GM12878 (cell line): ENCODE measurements at regions of chr15 and their contacts with region 1.

Region 1: DNA sequence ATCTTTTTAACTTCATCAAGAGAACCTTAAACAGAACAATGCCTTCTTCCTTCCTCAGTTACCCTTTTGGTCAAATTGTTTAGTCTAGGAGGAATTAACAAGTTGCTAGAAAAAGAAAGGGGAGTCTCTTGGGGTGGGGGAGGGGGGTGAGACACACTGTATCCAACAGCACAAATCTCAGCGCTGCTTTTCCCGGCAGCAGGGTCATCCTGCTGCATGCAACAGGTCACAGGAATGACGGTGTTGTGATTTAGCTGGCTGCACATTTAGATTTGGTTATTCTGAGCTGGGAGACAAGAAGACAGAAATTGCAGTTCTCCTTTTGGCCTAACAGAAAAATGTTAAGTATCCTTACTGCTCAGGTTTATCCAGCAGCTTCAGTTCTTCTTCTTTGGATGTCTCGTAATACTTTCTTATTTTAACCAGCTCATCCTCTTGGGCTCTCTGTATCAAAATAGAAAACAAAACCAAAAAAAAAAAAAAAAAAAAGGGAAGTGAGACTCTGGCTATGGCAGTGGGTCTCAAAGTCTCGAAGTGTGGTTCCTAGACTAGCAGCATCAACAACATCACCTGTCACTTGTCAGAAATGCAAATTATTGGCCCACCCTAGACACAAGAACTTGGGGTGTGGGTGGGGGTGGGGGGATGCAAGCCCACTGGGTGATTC is 190.5 kb downstream of the GREM1 start:
- DNase-seq: peak; percentile 71
- ATAC-seq: peak; percentile 95
- H3K4me3 ChIP-seq: peak overlapping the region; percentile 51; the same call in 1 of the 2 replicates
- H3K27ac ChIP-seq: peak overlapping the region; percentile 64
- H3K4me1 ChIP-seq: peaks cover 24% of the 10 kb centered on the region
- H3K27me3 ChIP-seq: no peaks in the 10 kb centered on the region
- CTCF ChIP-seq: no peak
- EP300 ChIP-seq: peak; percentile 91 to 96
- POLR2A ChIP-seq: no peak
- RAD21 ChIP-seq: no peak

Region 2: DNA sequence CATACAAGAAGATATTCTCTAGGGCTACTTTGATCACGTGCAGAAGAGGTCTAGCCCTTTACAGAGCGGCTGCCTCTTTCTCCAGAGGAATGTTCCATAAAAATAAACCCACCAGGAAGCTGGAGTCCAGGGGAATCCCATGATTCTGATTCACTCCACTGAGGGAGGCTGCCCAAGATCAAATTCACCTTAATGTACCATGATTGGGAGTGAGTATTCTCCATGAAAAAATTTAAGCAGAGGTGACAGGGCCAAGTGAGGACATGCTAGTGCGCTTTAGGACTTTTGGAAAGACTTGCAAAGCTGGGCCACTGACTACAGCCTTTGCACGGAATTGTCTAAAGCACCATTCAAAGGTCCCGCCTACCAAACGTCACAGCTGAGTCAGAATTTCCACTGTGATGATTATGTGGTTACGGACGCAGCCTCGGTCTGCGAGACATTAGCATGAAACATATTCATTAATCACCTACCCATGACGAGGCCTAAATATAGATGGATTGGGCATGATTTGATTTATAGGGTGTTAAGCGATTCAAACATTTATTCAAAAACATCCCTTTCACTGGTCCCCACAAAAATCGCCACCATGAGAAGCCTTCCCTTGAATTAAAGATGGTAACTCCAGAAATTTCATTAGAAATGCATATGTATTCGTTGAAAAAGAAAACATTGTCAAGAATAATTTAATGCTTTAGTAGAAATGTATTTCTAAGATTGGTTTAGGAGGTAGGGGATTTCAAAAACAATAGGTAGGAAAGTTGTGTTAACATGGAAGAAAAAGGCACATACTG is 37.8 kb before region 1 on chr15:
- CTCF ChIA-PET with region 1: no interaction called
- POLR2A ChIA-PET with region 1: interaction called, 4 read pairs
- RAD21 ChIA-PET with region 1: interaction called, 5 read pairs
- SMC1A ChIA-PET with region 1: interaction called, 10 read pairs
- in situ Hi-C with region 1: no loop called
- intact Hi-C with region 1: loop called (anchors 2 kb)
- DNase-seq: peak; percentile 60
- ATAC-seq: peak; percentile 94
- H3K4me3 ChIP-seq: no peak overlapping the region
- H3K27ac ChIP-seq: no peak overlapping the region
- H3K4me1 ChIP-seq: peaks cover 3% of the 10 kb centered on the region; the same call in 1 of the 2 replicates
- H3K27me3 ChIP-seq: no peaks in the 10 kb centered on the region
- CTCF ChIP-seq: no peak
- EP300 ChIP-seq: peak; percentile 89 to 92
- POLR2A ChIP-seq: no peak
- RAD21 ChIP-seq: no peak

Region 3: DNA sequence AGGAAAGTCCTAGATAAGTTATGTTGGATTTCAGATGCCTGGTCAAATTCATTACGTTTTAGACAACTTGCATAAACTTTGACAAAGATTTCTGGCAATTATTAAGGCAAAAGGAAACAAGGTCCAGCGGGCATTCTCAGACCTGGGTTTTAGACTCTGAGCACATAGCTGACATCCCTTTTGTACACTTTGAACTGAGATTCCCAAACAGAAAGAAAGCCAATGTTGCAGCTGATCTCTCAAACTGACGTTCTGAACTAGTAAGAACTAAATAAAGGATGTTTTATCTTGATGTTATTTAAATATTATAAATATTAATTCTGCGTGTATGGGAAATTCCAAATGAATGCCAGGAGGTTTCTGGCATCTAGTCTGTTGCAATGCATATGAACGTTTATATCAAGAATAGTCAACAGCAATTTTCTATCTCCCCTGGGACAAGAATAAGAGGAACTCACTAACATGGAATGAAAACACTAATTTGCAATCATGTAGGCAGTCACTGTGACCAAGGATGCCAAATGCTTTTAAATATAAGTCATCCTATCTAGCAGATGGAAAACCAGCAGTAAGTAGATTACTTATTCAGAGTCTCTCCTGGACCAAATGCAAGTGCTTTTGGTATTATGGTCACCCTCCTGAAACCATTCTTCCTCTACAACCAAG is 11.6 kb after region 1 on chr15:
- CTCF ChIA-PET with region 1: interaction called, 15 read pairs
- POLR2A ChIA-PET with region 1: interaction called, 21 read pairs
- RAD21 ChIA-PET with region 1: interaction called, 18 read pairs
- SMC1A ChIA-PET with region 1: interaction called, 29 read pairs
- in situ Hi-C with region 1: no loop called
- intact Hi-C with region 1: no loop called
- DNase-seq: no peak
- ATAC-seq: no peak
- H3K4me3 ChIP-seq: no peak overlapping the region
- H3K27ac ChIP-seq: no peak overlapping the region
- H3K4me1 ChIP-seq: 0 out of 2 replicates have a peak, but pooled peaks cover 5% of the 10 kb centered on the region
- H3K27me3 ChIP-seq: no peaks in the 10 kb centered on the region; a peak in 1 of 4 replicates
- CTCF ChIP-seq: no peak
- EP300 ChIP-seq: no peak
- POLR2A ChIP-seq: no peak
- RAD21 ChIP-seq: no peak

Region 4: DNA sequence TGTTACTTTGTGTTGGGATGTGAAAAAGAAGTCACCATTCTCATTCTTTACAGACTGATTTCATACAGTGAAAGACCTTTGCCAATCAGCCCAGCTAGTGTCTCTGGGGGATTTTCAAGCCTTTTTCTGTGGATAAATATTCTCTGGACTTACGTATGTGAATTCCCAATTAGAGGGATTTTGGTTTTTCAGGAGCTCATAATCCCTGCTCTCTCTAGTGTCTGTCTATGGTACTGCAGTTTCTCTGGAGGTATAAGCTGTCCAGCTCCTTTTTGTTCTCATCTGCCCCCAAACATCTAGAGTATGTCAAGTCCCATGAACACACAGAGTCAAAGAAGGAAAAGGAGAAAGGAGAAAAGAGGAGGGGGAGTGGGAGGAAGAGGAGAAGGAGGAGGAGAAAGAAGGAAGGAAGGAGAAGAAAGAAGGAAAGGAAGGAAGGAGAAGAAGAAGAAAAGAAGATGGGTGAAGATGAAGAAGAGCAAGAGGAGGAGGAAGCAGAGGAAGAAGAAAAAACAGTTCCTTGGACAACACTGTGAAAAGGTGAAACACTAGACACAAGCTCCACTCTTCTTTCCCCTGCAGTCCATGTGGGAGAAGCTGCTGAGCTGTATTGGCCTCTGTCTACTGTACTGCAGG is 28.1 kb after region 1 on chr15:
- CTCF ChIA-PET with region 1: interaction called, 16 read pairs
- POLR2A ChIA-PET with region 1: no interaction called
- RAD21 ChIA-PET with region 1: interaction called, 13 read pairs
- SMC1A ChIA-PET with region 1: interaction called, 12 read pairs
- in situ Hi-C with region 1: no loop called
- intact Hi-C with region 1: no loop called
- DNase-seq: no peak
- ATAC-seq: peak; percentile 56; the same call in 2 of the 3 replicates
- H3K4me3 ChIP-seq: no peak overlapping the region
- H3K27ac ChIP-seq: no peak overlapping the region
- H3K4me1 ChIP-seq: no peaks in the 10 kb centered on the region
- H3K27me3 ChIP-seq: peaks cover 0 to 2% of the 10 kb centered on the region in 2 experiments; a peak in 1 of 4 replicates
- CTCF ChIP-seq: peak; percentile 53 to 67 (median 66); a peak in 5 of 6 replicates
- EP300 ChIP-seq: no peak
- POLR2A ChIP-seq: no peak
- RAD21 ChIP-seq: peak; percentile 53

Region 5: GRCh38 chr15:33022629-33023028 is 114.4 kb after region 1 on chr15:
- CTCF ChIA-PET with region 1: no interaction called
- POLR2A ChIA-PET with region 1: no interaction called
- RAD21 ChIA-PET with region 1: no interaction called
- SMC1A ChIA-PET with region 1: no interaction called
- in situ Hi-C with region 1: no loop called
- intact Hi-C with region 1: no loop called
- DNase-seq: no peak
- ATAC-seq: no peak
- H3K4me3 ChIP-seq: no peak overlapping the region
- H3K27ac ChIP-seq: no peak overlapping the region
- H3K4me1 ChIP-seq: no peaks in the 10 kb centered on the region
- H3K27me3 ChIP-seq: no peaks in the 10 kb centered on the region
- CTCF ChIP-seq: no peak
- EP300 ChIP-seq: no peak
- POLR2A ChIP-seq: no peak
- RAD21 ChIP-seq: no peak